Activated CD4-positive, alpha-beta memory T cell treated with anti-CD3 and anti-CD28 coated beads for 36 hours (primary cell): ENCODE measurements at regions of chr1 and their contacts with region 1.

Region 1: DNA sequence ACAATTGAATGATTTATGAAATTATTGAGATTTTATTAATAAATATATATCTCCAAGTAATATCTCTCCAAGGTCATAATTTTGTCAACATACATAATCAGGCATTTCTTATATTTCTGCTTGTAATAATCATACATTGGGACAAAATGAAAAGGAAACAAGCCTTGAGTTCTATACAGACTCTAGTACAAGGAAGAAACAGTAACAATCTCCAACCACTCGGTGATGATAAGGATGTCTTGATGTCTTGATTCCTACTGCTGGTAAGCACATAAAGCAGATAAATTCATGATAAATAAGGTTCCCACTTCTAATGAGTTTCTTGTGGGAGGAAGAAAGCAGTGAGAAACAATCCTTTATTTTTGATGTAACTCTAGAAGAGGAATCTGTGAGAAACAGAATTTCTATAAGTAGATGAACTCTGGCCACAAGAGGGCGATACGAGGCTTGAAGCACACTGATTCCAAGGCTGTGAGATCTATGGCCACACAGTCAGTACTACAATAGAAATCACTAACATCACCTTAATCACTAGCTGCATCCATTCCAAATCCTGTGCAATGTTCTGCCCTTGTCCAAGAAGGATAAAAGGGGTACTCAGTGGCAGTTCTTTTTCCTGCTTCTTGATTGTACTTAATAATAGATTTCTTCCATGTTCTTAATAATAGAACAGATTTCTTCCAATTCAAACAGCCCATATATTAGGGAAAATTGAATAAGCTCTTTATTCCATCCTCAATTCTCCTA is 41.4 kb upstream of the LRRC8B start:
- DNase-seq: peak; percentile 85
- H3K4me3 Mint-ChIP-seq: no peak overlapping the region
- H3K27ac Mint-ChIP-seq: no peak overlapping the region
- H3K4me1 Mint-ChIP-seq: peaks cover 18% of the 10 kb centered on the region
- H3K27me3 Mint-ChIP-seq: no peaks in the 10 kb centered on the region

Region 2: GRCh38 chr1:89516055-89516454 is 32.9 kb after region 1 on chr1:
- CTCF ChIA-PET with region 1: interaction called, 25 read pairs
- POLR2A ChIA-PET with region 1: interaction called, 3 read pairs
- intact Hi-C with region 1: loop called (anchors 2 kb)
- DNase-seq: no peak
- H3K4me3 Mint-ChIP-seq: no peak overlapping the region
- H3K27ac Mint-ChIP-seq: peak overlapping the region; percentile 49
- H3K4me1 Mint-ChIP-seq: peaks cover 22% of the 10 kb centered on the region
- H3K27me3 Mint-ChIP-seq: peaks cover 10% of the 10 kb centered on the region

Region 3: GRCh38 chr1:89556726-89557444 is 73.7 kb after region 1 on chr1:
- CTCF ChIA-PET with region 1: no interaction called
- POLR2A ChIA-PET with region 1: no interaction called
- intact Hi-C with region 1: no loop called
- DNase-seq: no peak
- H3K4me3 Mint-ChIP-seq: no peak overlapping the region
- H3K27ac Mint-ChIP-seq: peak overlapping the region; percentile 34
- H3K4me1 Mint-ChIP-seq: peaks cover 55% of the 10 kb centered on the region
- H3K27me3 Mint-ChIP-seq: no peaks in the 10 kb centered on the region

Region 4: DNA sequence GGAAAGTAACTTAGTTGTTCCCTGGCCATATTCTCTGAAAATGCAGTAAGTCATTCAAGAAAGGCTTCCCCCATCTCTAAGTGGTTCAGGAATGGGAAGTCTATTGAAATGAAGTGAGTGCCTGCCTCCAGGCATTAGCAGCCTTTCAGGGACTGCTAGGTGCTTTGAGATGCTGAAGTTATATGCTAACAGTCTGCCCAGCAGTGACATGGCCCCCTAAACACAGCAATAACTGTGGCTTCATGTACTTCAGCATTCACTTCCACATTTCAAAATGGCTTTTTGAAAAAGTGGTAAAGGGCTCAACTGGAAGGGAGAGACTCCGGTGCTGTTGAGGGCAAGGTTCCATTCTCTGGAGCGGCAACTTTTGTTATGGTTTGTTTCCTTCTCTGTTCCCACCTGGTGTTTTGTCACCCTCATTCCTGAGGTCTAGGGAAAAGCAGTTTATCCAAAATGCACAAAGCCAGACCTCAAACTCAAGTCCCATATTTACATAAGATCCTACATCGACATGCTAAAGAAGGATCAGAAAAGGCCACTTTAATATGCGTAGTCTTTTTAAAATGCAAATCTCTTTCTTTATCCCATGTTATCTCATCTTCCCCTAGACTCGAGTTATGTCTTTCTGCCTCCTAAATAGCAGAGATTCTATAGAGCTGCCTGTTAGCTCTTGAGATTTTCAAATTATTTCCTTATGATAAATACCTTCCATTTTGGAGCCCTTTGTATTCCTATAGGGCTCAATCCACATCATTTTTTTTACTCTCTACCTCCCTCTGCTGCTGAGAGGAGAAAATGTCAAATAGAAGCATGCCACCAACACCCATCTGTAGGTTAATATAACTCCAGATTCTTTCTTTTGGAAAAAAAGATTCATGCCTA is 115.5 kb after region 1 on chr1:
- CTCF ChIA-PET with region 1: interaction called, 37 read pairs
- POLR2A ChIA-PET with region 1: no interaction called
- intact Hi-C with region 1: loop called (anchors 1 kb)
- DNase-seq: no peak
- H3K4me3 Mint-ChIP-seq: no peak overlapping the region
- H3K27ac Mint-ChIP-seq: peak overlapping the region; percentile 64
- H3K4me1 Mint-ChIP-seq: peaks cover 84% of the 10 kb centered on the region
- H3K27me3 Mint-ChIP-seq: no peaks in the 10 kb centered on the region

Region 5: DNA sequence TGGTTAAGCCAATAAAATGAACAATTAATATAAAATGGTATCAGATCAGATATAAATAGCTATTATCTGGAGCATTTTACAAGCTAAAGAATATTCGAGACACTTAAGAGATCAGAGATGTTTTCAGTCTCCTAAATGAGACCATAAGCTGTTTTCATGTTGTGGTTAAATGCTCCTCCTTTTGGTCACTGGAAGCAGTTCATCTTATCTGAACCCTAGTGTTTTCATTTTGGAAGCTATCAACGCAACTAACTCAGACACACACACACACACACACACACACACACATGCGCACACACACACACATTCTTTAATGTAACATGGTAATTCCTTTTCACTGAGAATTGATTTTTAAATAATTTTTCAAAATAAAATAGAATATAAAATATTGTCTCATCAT is 139.7 kb after region 1 on chr1:
- CTCF ChIA-PET with region 1: interaction called, 14 read pairs
- POLR2A ChIA-PET with region 1: no interaction called
- intact Hi-C with region 1: loop called (anchors 1 kb)
- DNase-seq: no peak
- H3K4me3 Mint-ChIP-seq: no peak overlapping the region
- H3K27ac Mint-ChIP-seq: no peak overlapping the region
- H3K4me1 Mint-ChIP-seq: peaks cover 68% of the 10 kb centered on the region
- H3K27me3 Mint-ChIP-seq: no peaks in the 10 kb centered on the region

Region 6: DNA sequence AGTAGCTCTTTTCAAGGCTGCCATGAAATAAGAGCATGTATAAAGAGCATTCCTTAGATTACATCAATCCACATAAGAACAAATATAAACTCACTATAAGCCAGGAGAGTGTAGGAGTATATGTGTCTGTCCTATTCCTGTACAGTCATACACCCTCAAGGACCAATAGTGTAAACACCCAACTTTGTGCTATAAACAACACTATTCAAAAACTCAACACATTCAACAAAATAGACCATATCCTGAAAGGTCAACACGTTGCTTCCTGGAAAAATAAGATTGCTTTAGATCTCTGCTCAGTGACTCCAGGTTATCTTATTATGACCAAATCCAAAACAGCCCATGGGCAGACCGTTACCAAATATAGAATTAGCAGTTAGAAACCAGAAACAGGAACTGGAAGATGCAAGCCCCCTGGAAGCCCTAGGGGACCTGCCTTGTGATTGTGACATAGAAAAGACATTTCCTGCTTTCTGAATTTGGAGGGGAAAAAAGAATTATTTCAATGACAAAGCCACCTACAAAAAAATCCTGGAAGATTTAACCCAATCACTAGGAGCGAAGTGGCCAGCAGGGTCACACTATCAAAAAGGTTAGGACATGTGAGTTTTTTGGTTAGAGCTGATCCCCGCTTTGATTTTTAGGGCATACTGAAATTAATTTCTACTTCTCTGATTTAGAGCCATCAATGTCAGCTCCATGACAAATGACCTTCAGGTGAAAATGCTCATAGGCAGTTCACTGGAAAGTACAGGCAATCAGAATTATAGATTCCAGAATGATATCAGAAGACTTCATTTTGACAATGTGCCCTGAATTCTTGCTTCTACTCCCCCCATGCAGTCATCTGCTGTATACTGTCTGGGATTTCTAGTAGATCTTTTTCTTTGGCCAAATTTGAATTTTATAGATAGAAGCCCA is 209.7 kb after region 1 on chr1:
- CTCF ChIA-PET with region 1: no interaction called
- POLR2A ChIA-PET with region 1: no interaction called
- intact Hi-C with region 1: loop called (anchors 5 kb)
- DNase-seq: no peak
- H3K4me3 Mint-ChIP-seq: no peak overlapping the region
- H3K27ac Mint-ChIP-seq: peak overlapping the region; percentile 86
- H3K4me1 Mint-ChIP-seq: peaks cover 93% of the 10 kb centered on the region
- H3K27me3 Mint-ChIP-seq: no peaks in the 10 kb centered on the region

Region 7: GRCh38 chr1:89987170-89987819 is 504.1 kb after region 1 on chr1:
- CTCF ChIA-PET with region 1: interaction called, 3 read pairs
- POLR2A ChIA-PET with region 1: no interaction called
- intact Hi-C with region 1: loop called (anchors 1 kb)
- DNase-seq: peak; percentile 50
- H3K4me3 Mint-ChIP-seq: no peak overlapping the region
- H3K27ac Mint-ChIP-seq: no peak overlapping the region
- H3K4me1 Mint-ChIP-seq: no peaks in the 10 kb centered on the region
- H3K27me3 Mint-ChIP-seq: no peaks in the 10 kb centered on the region